ENCODE measurements at regions of chr15 and their contacts with region 1.

Region 1: GRCh38 chr15:65304389-65305144 is at the start of gene RNU5B-1:
- DNase-seq: peak; percentile 95
- H3K4me3 ChIP-seq: peak within 1 kb of the TSS; percentile 58
- H3K27ac ChIP-seq: peak within 1 kb of the TSS; percentile 58
- H3K27me3 ChIP-seq: no peaks in the 10 kb centered on the region
- CTCF ChIP-seq: peak; percentile 89
- polyA plus RNA-seq, gene RNU5B-1: not detected in 2 replicates

Region 2: GRCh38 chr15:64836023-64836536 is 468.5 kb before region 1 on chr15:
- CTCF ChIA-PET with region 1: no interaction called
- POLR2A ChIA-PET with region 1: no interaction called
- DNase-seq: no peak
- H3K4me3 ChIP-seq: no peak overlapping the region
- H3K27ac ChIP-seq: no peak overlapping the region
- H3K27me3 ChIP-seq: no peaks in the 10 kb centered on the region
- CTCF ChIP-seq: no peak

Region 3: DNA sequence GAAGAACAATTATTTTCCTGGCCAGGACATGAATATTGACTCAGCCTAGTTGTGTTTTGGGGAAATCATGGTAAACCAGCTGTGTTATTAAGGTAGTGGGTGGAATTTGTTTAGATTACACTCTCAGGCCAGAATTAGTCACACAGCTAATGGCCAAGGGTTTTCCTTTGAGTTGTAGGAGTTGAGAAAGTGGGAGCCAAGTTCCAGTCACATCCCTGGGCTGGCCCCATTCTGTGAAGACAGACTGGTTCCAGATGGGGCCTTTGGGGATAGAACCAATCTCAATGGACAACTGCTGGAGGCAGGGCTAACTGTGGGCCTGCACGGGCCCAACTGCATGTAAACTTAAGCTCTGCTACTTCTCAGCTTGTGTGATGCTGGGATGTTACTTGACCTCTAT is 235.4 kb before region 1 on chr15:
- CTCF ChIA-PET with region 1: no interaction called
- POLR2A ChIA-PET with region 1: interaction called, 19 read pairs
- DNase-seq: peak; percentile 99
- H3K4me3 ChIP-seq: no peak overlapping the region
- H3K27ac ChIP-seq: peak overlapping the region; percentile 91
- H3K27me3 ChIP-seq: peaks cover 9% of the 10 kb centered on the region
- CTCF ChIP-seq: no peak

Region 4: DNA sequence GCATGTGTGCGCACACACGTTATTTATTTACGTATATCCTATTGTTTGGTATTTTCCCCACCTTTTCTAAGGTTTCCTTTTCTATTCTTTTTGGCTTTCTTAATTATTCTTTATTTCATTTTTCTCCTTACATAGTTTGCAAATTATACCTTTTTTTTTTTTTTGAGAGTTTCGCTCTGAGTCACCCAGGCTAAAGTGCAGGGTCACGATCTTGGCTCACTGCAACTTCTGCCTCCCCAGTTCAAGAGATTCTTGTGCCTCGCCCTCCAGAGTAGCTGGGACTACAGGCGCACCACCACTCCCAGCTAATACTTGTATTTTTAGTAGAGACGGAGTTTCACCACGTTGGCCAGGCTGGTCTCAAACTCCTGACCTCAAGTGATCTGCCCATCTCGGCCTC is 73.3 kb before region 1 on chr15:
- CTCF ChIA-PET with region 1: no interaction called
- POLR2A ChIA-PET with region 1: no interaction called
- DNase-seq: no peak
- H3K4me3 ChIP-seq: no peak overlapping the region
- H3K27ac ChIP-seq: no peak overlapping the region
- H3K27me3 ChIP-seq: no peaks in the 10 kb centered on the region
- CTCF ChIP-seq: no peak

Region 5: DNA sequence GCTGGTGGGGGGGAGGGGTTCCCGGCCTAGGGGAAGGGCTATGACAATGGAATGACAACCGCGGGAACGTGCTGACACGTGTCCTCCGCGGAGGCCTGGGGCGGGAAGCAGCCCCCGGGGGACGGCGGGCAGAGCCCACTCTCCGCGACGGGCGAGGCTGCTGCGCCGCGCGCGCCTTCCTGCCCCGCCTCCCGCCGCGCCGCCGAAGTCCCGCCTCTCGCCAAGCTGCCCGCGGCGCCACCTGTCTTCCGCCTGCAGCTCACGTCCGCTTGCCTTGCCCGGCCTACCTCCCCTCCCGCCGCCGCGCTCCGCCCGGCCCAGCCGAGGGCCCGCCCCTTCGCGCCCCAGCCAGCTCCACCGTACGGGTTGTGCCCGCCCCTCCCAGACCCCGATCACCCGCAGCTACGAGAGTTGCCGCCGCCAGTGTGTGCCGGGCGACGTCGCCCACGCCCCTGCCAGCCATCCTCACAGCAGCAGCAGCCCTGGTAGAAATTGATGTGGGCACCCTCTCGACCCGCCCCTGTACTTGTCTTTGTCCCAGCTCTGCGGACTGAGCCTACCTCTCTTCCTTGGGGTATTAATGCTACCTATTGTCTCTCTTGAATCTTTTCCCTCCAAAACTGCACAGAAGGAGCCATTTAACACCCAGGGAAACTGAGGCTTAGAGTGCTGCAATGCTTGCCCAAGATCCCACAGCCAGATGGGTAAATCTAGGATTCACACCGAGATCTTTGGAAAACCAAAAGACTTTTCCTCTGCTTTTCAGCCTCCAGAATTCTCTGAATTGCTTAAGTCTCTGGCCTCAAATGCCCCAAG is 17.7 kb before region 1 on chr15 and contains the start of gene PARP16:
- CTCF ChIA-PET with region 1: interaction called, 5 read pairs
- POLR2A ChIA-PET with region 1: interaction called, 29 read pairs
- DNase-seq: peak; percentile 24
- H3K4me3 ChIP-seq: peak within 1 kb of the TSS; percentile 67
- H3K27ac ChIP-seq: peak within 1 kb of the TSS; percentile 21
- H3K27me3 ChIP-seq: no peaks in the 10 kb centered on the region
- CTCF ChIP-seq: peak; percentile 24; the same call in 1 of the 2 replicates
- polyA plus RNA-seq, gene PARP16: 4.5 and 5.3 TPM in 2 replicates

Region 6: GRCh38 chr15:65466901-65467300 is 162.3 kb after region 1 on chr15:
- CTCF ChIA-PET with region 1: no interaction called
- POLR2A ChIA-PET with region 1: interaction called, 12 read pairs
- DNase-seq: no peak
- H3K4me3 ChIP-seq: no peak overlapping the region
- H3K27ac ChIP-seq: no peak overlapping the region
- H3K27me3 ChIP-seq: no peaks in the 10 kb centered on the region
- CTCF ChIP-seq: no peak

Measured in AG04450 (cell line).